Right ventricle myocardium superior (tissue), 1 donor: ENCODE measurements at regions of chr7 and their contacts with region 1.

Region 1: DNA sequence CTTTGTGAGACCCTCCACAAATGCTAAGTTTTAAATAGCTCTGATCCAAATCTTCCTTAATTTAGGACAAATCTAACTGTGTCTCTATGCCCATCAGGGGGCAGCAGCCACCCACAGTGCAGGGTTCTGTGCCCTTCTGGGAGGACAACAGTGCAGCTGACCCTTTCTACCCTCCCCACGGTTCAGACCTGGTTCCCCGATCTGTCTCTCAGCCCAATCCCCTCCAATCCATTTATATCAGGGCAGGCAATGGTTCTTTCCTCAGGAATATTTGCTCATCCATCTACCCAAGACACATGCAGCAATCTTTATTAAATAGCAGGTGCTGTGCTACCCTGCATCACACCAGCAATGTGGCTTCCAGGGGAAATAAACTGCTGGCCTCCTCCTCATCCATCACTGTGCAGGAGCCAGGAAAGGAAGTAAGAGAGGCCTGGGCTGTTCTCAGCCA is 4.0 kb upstream of the RBM28 start:
- DNase-seq: peak; percentile 71
- ATAC-seq: peak; percentile 32

Region 2: DNA sequence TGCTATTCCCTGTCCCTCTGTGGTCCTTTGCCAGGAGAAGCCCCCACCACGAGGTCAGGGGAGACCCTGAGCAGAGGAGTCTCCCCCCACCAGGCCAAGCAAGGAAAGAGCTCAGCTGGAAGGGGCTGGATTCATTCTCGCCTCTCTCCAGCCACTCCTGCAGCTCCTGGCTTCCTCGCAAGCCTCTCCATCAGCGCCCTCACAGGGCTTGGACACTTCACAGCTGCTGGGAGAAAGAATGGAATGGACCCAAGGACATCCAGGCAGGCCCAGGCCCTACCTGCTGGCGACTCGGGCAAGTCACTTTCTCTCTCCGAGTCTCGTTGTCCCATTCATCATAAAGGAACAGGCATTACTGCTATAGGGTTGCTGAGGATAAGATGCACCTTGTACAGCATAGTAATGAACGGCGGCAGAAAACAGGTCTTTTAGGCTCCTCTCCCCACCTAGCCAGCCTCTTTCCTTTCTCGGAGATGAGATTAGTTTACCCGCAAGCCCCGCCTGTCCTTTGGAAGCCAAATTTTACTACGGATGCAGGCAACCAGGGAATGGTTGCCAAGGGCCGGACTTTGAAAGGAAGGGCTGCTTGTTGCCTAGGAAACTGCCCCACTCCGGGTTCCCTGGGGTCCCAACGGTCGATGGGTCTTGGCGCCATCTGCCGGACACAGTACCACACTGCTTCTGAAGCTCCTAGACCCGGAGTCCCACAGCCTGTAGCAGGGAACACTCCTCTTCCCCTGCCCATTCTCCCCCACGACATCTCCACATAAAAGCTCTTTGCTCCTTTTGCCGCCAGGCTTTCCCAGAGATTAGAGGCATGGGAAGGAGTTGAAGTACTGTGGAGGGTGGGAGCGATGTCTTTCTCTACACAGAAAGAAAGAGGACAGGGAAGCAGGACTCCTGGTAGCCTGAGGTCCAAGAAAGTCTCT is 39.8 kb after region 1 on chr7:
- intact Hi-C with region 1: loop called (anchors 2 kb)
- DNase-seq: peak; percentile 89
- ATAC-seq: peak; percentile 93

Region 3: DNA sequence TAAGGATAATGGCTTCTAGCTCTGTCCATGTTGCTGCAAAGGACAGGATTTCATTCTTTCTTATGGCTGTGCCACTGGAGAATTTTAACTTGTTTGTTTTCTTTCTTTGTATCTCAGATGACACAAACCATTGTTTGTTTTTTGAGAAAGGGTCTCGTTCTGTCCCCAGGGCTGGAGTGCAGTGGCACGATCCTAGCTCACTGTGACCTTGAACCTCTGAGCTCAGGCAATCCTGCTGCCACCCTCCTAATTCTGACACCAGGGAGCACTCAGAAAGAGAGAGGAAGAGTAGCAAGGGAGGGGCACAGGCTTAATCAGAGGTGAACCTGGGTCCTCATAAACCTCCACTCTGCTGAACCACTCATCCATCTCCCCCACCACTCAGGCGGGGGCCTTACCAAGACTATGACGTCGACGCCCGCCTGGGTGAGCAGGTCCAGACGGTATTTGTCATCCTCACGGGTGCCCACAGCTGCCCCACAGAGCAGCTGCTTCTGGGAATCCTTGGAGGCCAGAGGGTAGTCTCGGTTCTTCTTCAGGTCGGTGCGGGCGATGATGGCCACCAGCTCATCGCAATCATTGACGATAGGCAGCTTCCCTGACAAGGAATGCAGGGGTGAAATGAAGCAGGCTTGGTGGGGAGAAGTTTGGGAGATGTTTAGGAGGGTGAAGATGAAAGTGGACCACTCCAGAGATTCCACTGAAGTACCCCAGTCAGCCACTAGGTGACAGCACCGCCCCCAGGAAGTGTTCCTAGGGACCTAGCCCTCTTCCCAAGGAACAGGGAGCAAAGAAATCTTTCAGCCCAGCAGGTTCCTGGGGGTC is 50.6 kb after region 1 on chr7:
- intact Hi-C with region 1: no loop called
- DNase-seq: peak; percentile 69
- ATAC-seq: peak; percentile 77